Heart right ventricle (tissue), 16 donors: ENCODE measurements at regions of chr18 and their contacts with region 1.

Region 1: GRCh38 chr18:74116633-74117554 is 30.7 kb downstream of the FBXO15 start:
- DNase-seq: no peak
- ATAC-seq: peak in 1 of 8 donors; percentile 45
- H3K4me3 ChIP-seq: no peak overlapping the region
- H3K27ac ChIP-seq: no peak overlapping the region
- H3K4me1 ChIP-seq: peaks cover 0 to 7% (median 0%) of the 10 kb centered on the region in 9 donors
- H3K27me3 ChIP-seq: peaks cover 0 to 6% (median 0%) of the 10 kb centered on the region in 7 donors
- CTCF ChIP-seq: peak in 8 of 9 donors; percentile 34 to 67 (median 60)

Region 2: GRCh38 chr18:72700961-72701718 is 1415.8 kb before region 1 on chr18:
- intact Hi-C with region 1: loop called in 2 of 10 experiments (anchors 5 kb)
- DNase-seq: no peak
- ATAC-seq: no peak
- H3K4me3 ChIP-seq: no peak overlapping the region
- H3K27ac ChIP-seq: no peak overlapping the region
- H3K4me1 ChIP-seq: no peaks in the 10 kb centered on the region
- H3K27me3 ChIP-seq: no peaks in the 10 kb centered on the region
- CTCF ChIP-seq: peak in 7 of 9 donors; percentile 27 to 55 (median 36)

Region 3: GRCh38 chr18:72762515-72763122 is 1354.3 kb before region 1 on chr18:
- intact Hi-C with region 1: loop called in 7 of 10 experiments (anchors 5 to 10 kb)
- DNase-seq: peak in 1 of 2 donors; percentile 17
- ATAC-seq: no peak
- H3K4me3 ChIP-seq: no peak overlapping the region
- H3K27ac ChIP-seq: no peak overlapping the region
- H3K4me1 ChIP-seq: no peaks in the 10 kb centered on the region
- H3K27me3 ChIP-seq: no peaks in the 10 kb centered on the region
- CTCF ChIP-seq: peak; percentile 47 to 85 (median 78)

Region 4: GRCh38 chr18:72768681-72769229 is 1348.1 kb before region 1 on chr18:
- intact Hi-C with region 1: loop called in 7 of 10 experiments (anchors 5 to 10 kb)
- DNase-seq: no peak
- ATAC-seq: no peak
- H3K4me3 ChIP-seq: no peak overlapping the region
- H3K27ac ChIP-seq: no peak overlapping the region
- H3K4me1 ChIP-seq: no peaks in the 10 kb centered on the region
- H3K27me3 ChIP-seq: peaks cover 0 to 4% (median 0%) of the 10 kb centered on the region in 7 donors
- CTCF ChIP-seq: peak in 1 of 9 donors; percentile 23

Region 5: GRCh38 chr18:74171910-74172606 is 55.2 kb after region 1 on chr18:
- intact Hi-C with region 1: loop called in 1 of 10 experiments (anchors 10 kb)
- DNase-seq: no peak
- ATAC-seq: no peak
- H3K4me3 ChIP-seq: peak overlapping the region in 1 of 10 donors; percentile 4
- H3K27ac ChIP-seq: no peak overlapping the region
- H3K4me1 ChIP-seq: no peaks in the 10 kb centered on the region
- H3K27me3 ChIP-seq: peaks cover 0 to 38% (median 11%) of the 10 kb centered on the region in 7 donors
- CTCF ChIP-seq: no peak

Region 6: DNA sequence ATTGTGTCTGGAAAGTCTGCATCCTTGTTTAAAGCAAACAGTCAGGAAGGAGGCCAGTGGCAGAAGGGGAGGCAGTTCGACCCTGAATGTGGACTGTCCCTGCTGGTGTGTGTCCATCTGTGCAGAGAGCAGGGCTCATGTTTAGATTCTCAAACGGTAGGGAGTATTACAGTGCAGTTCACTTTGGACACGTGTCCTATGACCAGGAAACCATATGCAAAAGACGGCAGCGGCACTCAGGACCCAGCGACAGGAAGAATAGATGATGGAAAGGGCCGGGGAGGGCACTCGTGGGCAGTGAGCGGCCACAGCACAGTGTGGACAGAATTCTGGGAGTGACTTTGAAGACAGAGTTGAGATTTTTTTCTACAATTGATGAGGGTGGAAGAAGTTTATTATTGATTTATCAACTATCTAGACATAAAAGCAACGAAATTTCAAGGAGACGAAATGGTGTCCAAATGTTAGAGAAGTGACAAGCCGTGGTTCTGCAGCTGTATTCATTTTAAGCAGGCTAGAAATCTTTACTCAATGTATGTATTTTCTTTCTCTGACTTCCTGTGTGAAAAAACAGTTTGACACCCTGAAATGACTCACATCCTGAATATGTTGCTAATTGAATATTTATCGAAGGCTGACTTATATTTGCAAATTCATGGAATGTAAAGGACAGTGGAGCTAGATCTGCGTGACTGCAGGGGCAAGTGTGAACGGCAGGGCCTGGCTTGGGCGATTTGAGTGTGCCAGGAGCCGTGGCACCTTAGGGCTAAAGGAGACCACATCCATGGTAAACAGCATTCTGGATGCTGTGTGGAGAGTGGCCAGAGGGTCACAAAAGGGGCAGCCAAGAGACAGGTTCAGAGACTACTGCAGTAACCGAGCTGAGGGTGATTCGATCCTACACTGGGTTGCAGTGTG is 877.9 kb after region 1 on chr18:
- intact Hi-C with region 1: no loop called
- DNase-seq: no peak
- ATAC-seq: peak in 3 of 8 donors; percentile 35 to 44 (median 42)
- H3K4me3 ChIP-seq: peak overlapping the region in 1 of 10 donors; percentile 22
- H3K27ac ChIP-seq: peak overlapping the region in 1 of 10 donors; percentile 86
- H3K4me1 ChIP-seq: peaks cover 0 to 53% (median 0%) of the 10 kb centered on the region in 9 donors
- H3K27me3 ChIP-seq: no peaks in the 10 kb centered on the region
- CTCF ChIP-seq: no peak